PC-3 (cell line): ENCODE measurements at regions of chr4 and their contacts with region 1.

Region 1: DNA sequence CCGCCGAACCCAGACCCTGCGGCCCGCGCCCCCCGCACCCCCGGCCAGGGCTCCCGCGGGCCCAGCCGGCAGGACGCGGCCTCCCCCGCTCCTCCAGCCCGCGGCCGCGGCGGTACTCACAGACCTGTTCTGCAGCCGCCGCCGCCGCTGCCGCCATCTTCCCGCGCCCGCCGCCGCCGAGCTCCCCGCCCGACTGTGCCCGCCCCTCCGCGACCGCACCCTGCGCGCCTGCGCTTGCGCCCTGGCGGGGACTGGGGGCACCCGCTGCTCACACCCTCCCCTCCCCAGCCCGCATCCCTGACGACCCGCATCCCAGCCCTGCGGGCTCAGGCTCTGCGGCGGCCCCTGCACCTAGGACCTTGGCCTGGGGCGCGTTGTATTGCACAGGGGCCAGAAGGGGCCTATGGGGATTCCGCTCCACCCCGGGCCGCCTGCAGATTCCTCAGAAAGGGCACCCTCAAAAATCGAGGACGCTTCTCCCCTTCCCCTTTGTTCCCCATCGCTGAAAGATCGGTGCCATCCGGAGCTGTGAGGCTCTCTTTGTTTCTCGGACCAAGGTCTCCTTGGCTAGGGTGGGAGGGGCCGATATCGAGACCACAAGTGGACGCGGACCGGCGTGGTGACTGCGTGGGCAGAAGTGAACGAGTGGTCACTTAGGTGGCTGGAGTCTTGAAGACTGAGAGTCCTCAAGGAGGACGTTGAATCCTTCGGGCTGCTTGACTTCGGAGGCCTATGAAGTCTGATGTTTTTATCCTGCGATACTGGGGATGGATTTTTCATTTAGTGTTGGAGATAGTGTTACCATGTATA is at the start of gene SGCB:
- DNase-seq: peak; percentile 58
- ATAC-seq: peak; percentile 88
- H3K4me3 ChIP-seq: peak within 1 kb of the TSS; percentile 86
- H3K27ac ChIP-seq: no peak within 1 kb of the TSS
- H3K4me1 ChIP-seq: peaks cover 17% of the 10 kb centered on the region
- H3K27me3 ChIP-seq: no peaks in the 10 kb centered on the region
- CTCF ChIP-seq: no peak
- total RNA-seq, gene SGCB: 17.3 and 17.7 TPM in 2 replicates

Region 2: DNA sequence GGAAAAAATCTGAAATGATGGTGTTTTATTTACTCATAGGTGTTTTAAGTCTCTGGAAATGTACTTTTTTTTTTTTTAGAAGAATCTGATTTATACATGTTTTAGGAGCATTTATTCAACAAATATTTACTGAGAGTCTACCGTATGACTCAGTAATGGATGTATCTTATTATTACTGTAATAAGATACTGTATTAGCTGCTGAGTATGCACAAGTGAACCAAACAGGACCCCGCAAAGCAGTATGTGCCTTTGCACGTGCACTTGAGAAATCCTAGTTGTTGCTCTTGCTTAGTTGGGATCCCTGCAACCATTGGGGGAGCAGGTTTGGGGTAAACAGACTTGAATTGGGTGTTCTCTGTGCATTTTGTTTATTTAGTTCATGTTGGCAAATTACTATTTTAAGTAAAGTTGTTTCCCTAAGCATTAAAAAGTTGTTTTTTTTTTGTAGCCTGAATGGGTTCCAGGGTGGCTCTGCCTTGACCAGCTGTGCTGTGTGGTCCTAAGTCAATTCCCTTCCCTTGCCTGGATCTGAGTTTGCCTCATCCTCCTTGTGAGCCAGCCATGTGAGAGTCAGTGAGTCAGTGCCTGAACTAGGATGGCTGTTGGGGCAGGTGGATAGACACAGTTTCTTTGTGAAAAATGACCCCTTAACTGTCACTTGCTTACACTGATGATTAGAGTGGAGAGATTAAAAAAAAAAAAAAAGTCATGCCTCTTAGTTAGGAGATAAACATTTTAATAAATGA is 167.7 kb before region 1 on chr4:
- CTCF ChIA-PET with region 1: no interaction called
- POLR2A ChIA-PET with region 1: no interaction called
- intact Hi-C with region 1: no loop called
- DNase-seq: peak; percentile 78
- ATAC-seq: peak; percentile 85
- H3K4me3 ChIP-seq: no peak overlapping the region
- H3K27ac ChIP-seq: peak overlapping the region; percentile 57
- H3K4me1 ChIP-seq: peaks cover 27% of the 10 kb centered on the region
- H3K27me3 ChIP-seq: no peaks in the 10 kb centered on the region
- CTCF ChIP-seq: no peak

Region 3: DNA sequence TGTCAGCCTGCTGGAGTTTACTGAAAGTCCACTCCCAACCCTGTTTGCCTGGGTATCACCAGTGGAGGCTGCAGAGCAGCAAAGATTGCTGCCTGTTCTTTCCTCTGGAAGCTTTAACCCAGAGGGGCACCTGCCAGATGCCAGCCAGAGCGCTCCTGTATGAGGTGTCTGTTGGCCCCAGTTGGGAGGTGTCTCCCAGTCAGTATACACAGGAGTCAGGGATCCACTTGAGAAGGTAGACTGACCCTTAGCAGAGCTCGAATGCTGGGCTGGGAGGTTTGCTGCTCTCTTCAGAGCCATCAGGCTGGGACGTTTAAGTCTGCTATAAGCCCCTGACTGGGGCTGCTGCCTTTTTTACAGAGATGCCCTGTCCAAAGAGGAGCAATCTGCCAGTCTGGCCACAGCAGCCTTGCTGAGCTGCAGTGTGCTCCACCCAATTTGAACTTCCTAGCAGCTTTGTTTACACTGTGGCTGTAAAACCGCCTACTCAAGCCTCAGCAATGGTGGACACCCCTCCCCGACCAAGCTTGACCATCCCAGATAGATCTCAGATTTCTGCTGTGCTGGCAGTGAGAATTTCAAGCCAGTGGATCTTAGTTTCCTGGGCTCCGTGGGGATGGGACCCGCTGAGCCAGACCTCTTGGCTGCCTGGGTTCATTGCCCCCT is 53.4 kb after region 1 on chr4:
- CTCF ChIA-PET with region 1: no interaction called
- POLR2A ChIA-PET with region 1: interaction called, 3 read pairs
- intact Hi-C with region 1: loop called (anchors 2 kb)
- DNase-seq: peak; percentile 90
- ATAC-seq: peak; percentile 99
- H3K4me3 ChIP-seq: peak overlapping the region; percentile 16; the same call in 1 of the 2 replicates
- H3K27ac ChIP-seq: 0 out of 2 replicates have a peak overlapping the region, but pooled peaks have one; percentile 9
- H3K4me1 ChIP-seq: peaks cover 32% of the 10 kb centered on the region
- H3K27me3 ChIP-seq: no peaks in the 10 kb centered on the region
- CTCF ChIP-seq: no peak

Region 4: GRCh38 chr4:52160859-52161258 is 122.6 kb after region 1 on chr4:
- CTCF ChIA-PET with region 1: no interaction called
- POLR2A ChIA-PET with region 1: no interaction called
- intact Hi-C with region 1: no loop called
- DNase-seq: no peak
- ATAC-seq: no peak
- H3K4me3 ChIP-seq: no peak overlapping the region
- H3K27ac ChIP-seq: no peak overlapping the region
- H3K4me1 ChIP-seq: no peaks in the 10 kb centered on the region
- H3K27me3 ChIP-seq: peaks cover 14% of the 10 kb centered on the region; the same call in 1 of the 2 replicates
- CTCF ChIP-seq: no peak

Region 5: GRCh38 chr4:52172166-52172565 is 133.9 kb after region 1 on chr4:
- CTCF ChIA-PET with region 1: no interaction called
- POLR2A ChIA-PET with region 1: no interaction called
- intact Hi-C with region 1: loop called (anchors 10 kb)
- DNase-seq: peak; percentile 46
- ATAC-seq: no peak
- H3K4me3 ChIP-seq: no peak overlapping the region
- H3K27ac ChIP-seq: no peak overlapping the region
- H3K4me1 ChIP-seq: no peaks in the 10 kb centered on the region
- H3K27me3 ChIP-seq: no peaks in the 10 kb centered on the region
- CTCF ChIP-seq: peak; percentile 61; the same call in 1 of the 2 replicates